B cell (primary cell): ENCODE measurements at regions of chr19 and their contacts with region 1.

Region 1: GRCh38 chr19:38849860-38850435 is at the start of gene HNRNPL:
- DNase-seq: peak; percentile 100
- ATAC-seq: peak; percentile 60
- H3K4me3 ChIP-seq: peak within 1 kb of the TSS; percentile 63 to 95 (median 83)
- H3K4me3 Mint-ChIP-seq: peak within 1 kb of the TSS; percentile 92
- H3K27ac ChIP-seq: peak within 1 kb of the TSS; percentile 82 to 98
- H3K27ac Mint-ChIP-seq: peak within 1 kb of the TSS; percentile 99
- H3K4me1 ChIP-seq: peaks cover 37 to 51% of the 10 kb centered on the region in 2 donors
- H3K4me1 Mint-ChIP-seq: peaks cover 56% of the 10 kb centered on the region
- H3K27me3 ChIP-seq: no peaks in the 10 kb centered on the region
- H3K27me3 Mint-ChIP-seq: no peaks in the 10 kb centered on the region
- CTCF ChIP-seq: peak; percentile 37
- total RNA-seq, gene HNRNPL: 397 and 418 TPM in 2 replicates

Region 2: GRCh38 chr19:38647368-38647965 is 202.5 kb before region 1 on chr19 and contains the start of gene ACTN4:
- CTCF ChIA-PET with region 1: no interaction called
- POLR2A ChIA-PET with region 1: no interaction called
- intact Hi-C with region 1: loop called (anchors 5 kb)
- DNase-seq: peak; percentile 100
- ATAC-seq: peak; percentile 94
- H3K4me3 ChIP-seq: peak within 1 kb of the TSS; percentile 82 to 96 (median 91)
- H3K4me3 Mint-ChIP-seq: peak within 1 kb of the TSS; percentile 90
- H3K27ac ChIP-seq: peak within 1 kb of the TSS; percentile 40 to 68
- H3K27ac Mint-ChIP-seq: peak within 1 kb of the TSS; percentile 93
- H3K4me1 ChIP-seq: peaks cover 21 to 31% of the 10 kb centered on the region in 2 donors
- H3K4me1 Mint-ChIP-seq: peaks cover 37% of the 10 kb centered on the region
- H3K27me3 ChIP-seq: no peaks in the 10 kb centered on the region
- H3K27me3 Mint-ChIP-seq: no peaks in the 10 kb centered on the region
- CTCF ChIP-seq: no peak
- total RNA-seq, gene ACTN4: 154 and 164 TPM in 2 replicates

Region 3: GRCh38 chr19:38769635-38770211 is 80.2 kb before region 1 on chr19:
- CTCF ChIA-PET with region 1: interaction called, 4 read pairs
- POLR2A ChIA-PET with region 1: interaction called, 14 read pairs
- intact Hi-C with region 1: no loop called
- DNase-seq: peak; percentile 95
- ATAC-seq: peak; percentile 91
- H3K4me3 ChIP-seq: peak overlapping the region in 4 of 5 experiments; percentile 40 to 59 (median 47)
- H3K4me3 Mint-ChIP-seq: peak overlapping the region; percentile 81
- H3K27ac ChIP-seq: peak overlapping the region; percentile 75 to 77
- H3K27ac Mint-ChIP-seq: peak overlapping the region; percentile 89
- H3K4me1 ChIP-seq: peaks cover 6 to 12% of the 10 kb centered on the region in 2 donors
- H3K4me1 Mint-ChIP-seq: peaks cover 11% of the 10 kb centered on the region
- H3K27me3 ChIP-seq: no peaks in the 10 kb centered on the region
- H3K27me3 Mint-ChIP-seq: no peaks in the 10 kb centered on the region
- CTCF ChIP-seq: peak; percentile 86

Region 4: DNA sequence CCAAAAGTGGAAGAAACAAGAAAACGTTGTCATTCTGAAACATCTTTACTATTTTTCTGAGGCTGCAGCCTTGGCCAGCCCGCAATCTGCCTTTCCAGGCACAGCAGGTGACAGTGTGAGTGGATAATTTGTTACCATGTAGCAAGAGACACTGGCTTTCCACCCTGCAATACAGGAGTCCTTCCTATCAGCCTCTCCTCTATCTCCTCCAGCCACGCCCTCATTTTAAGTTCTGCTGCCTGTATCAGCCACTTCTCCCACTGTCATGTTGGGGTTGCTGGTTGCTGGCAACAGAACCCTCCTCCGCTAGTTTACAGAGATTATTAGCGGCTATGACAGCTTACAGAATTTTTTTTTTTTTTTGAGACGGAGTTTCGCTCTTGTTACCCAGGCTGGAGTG is 68.9 kb before region 1 on chr19:
- CTCF ChIA-PET with region 1: no interaction called
- POLR2A ChIA-PET with region 1: no interaction called
- intact Hi-C with region 1: no loop called
- DNase-seq: no peak
- ATAC-seq: no peak
- H3K4me3 ChIP-seq: no peak overlapping the region
- H3K4me3 Mint-ChIP-seq: no peak overlapping the region
- H3K27ac ChIP-seq: no peak overlapping the region
- H3K27ac Mint-ChIP-seq: no peak overlapping the region
- H3K4me1 ChIP-seq: no peaks in the 10 kb centered on the region
- H3K4me1 Mint-ChIP-seq: no peaks in the 10 kb centered on the region
- H3K27me3 ChIP-seq: no peaks in the 10 kb centered on the region
- H3K27me3 Mint-ChIP-seq: peaks cover 9% of the 10 kb centered on the region
- CTCF ChIP-seq: no peak

Region 5: GRCh38 chr19:38869856-38870607 is 20.1 kb after region 1 on chr19:
- CTCF ChIA-PET with region 1: interaction called, 62 read pairs
- POLR2A ChIA-PET with region 1: interaction called, 237 read pairs
- intact Hi-C with region 1: loop called (anchors 1 kb)
- DNase-seq: peak; percentile 97
- ATAC-seq: peak; percentile 87
- H3K4me3 ChIP-seq: peak overlapping the region; percentile 70 to 97 (median 86)
- H3K4me3 Mint-ChIP-seq: peak overlapping the region; percentile 95
- H3K27ac ChIP-seq: peak overlapping the region; percentile 72 to 76
- H3K27ac Mint-ChIP-seq: peak overlapping the region; percentile 92
- H3K4me1 ChIP-seq: peaks cover 39 to 53% of the 10 kb centered on the region in 2 donors
- H3K4me1 Mint-ChIP-seq: peaks cover 54% of the 10 kb centered on the region
- H3K27me3 ChIP-seq: no peaks in the 10 kb centered on the region
- H3K27me3 Mint-ChIP-seq: no peaks in the 10 kb centered on the region
- CTCF ChIP-seq: peak; percentile 86

Region 6: DNA sequence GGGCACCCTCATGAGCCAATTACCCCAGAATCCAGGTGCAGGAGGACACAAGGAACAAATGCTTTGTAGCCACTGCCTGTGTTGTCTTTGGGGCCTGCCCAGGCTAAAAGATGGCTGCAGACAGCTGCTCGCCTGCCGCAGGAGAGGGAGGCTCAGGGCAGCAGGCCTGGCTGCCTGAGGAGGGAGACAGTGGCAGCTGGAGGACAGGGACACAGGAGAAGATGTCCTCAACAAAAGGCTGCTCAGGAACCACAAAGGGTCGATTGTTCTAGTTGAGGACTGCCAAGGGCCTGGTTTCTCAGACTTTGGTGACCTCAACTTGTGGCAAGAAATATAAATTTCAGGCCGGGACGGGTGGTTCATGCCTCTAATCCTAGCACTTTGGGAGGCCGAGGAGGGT is 41.8 kb after region 1 on chr19:
- CTCF ChIA-PET with region 1: interaction called, 12 read pairs
- POLR2A ChIA-PET with region 1: interaction called, 5 read pairs
- intact Hi-C with region 1: loop called (anchors 1 kb)
- DNase-seq: no peak
- ATAC-seq: no peak
- H3K4me3 ChIP-seq: no peak overlapping the region
- H3K4me3 Mint-ChIP-seq: no peak overlapping the region
- H3K27ac ChIP-seq: no peak overlapping the region
- H3K27ac Mint-ChIP-seq: no peak overlapping the region
- H3K4me1 ChIP-seq: peaks cover 3 to 11% of the 10 kb centered on the region in 2 donors
- H3K4me1 Mint-ChIP-seq: peaks cover 4% of the 10 kb centered on the region
- H3K27me3 ChIP-seq: no peaks in the 10 kb centered on the region
- H3K27me3 Mint-ChIP-seq: no peaks in the 10 kb centered on the region
- CTCF ChIP-seq: no peak